OCI-LY7 (cell line): ENCODE measurements at regions of chr16 and their contacts with region 1.

Region 1: GRCh38 chr16:8963825-8964441 is at the start of gene USP7:
- DNase-seq: peak; percentile 94
- H3K4me3 ChIP-seq: peak within 1 kb of the TSS; percentile 84
- H3K27ac ChIP-seq: peak within 1 kb of the TSS; percentile 67
- H3K4me1 ChIP-seq: peaks cover 38% of the 10 kb centered on the region
- CTCF ChIP-seq: no peak
- total RNA-seq, gene USP7: 46.4 and 61.5 TPM in 2 replicates

Region 2: GRCh38 chr16:8943966-8944759 is 19.8 kb before region 1 on chr16:
- CTCF ChIA-PET with region 1: no interaction called
- POLR2A ChIA-PET with region 1: interaction called, 4 read pairs
- intact Hi-C with region 1: loop called (anchors 2 kb)
- DNase-seq: peak; percentile 84
- H3K4me3 ChIP-seq: peak overlapping the region; percentile 57
- H3K27ac ChIP-seq: peak overlapping the region; percentile 4
- H3K4me1 ChIP-seq: peaks cover 70% of the 10 kb centered on the region
- CTCF ChIP-seq: no peak